ENCODE measurements at regions of chr9 and their contacts with region 1.

Region 1: DNA sequence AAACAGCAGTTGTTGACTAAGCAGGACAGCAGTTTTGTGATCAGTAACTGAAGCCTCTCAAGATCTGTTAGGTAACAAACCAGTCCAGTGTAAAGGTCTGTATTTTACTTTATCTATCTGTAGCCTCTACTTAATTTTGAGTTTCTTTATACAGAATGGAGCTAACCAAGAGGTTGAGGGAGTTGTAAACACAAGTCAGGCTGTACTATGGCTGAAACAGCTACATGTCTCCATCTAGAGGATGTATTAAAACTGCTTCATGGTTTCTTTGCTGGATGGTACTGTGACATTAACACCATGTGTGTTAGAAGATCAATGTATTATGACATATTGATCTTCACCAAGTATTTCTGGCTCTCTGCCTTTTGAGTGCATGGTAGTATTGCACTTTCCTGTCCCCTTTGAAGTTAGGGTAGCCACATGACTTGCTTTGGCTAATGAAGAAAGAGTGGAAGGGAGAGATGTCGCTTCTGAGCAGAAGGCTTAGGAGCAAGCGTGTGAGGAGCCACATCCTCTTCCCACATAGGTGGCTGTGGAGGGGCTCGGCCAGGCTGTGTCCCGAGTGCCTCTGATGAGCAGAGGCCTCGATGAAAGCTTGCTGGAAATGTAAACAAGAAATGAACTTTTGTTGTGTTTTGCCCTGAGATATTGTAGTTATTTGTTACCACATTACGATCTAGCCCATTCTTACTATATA is 105.6 kb upstream of the PCA3 start:
- DNase-seq: peak in 2 of 9 experiments; percentile 61 to 71
- ATAC-seq: peak; percentile 67
- H3K4me3 ChIP-seq: no peak overlapping the region
- H3K4me3 Mint-ChIP-seq: no peak overlapping the region
- H3K27ac ChIP-seq: no peak overlapping the region
- H3K27ac Mint-ChIP-seq: no peak overlapping the region
- H3K4me1 ChIP-seq: peaks cover 4% of the 10 kb centered on the region
- H3K4me1 Mint-ChIP-seq: peaks cover 23% of the 10 kb centered on the region
- H3K27me3 ChIP-seq: no peaks in the 10 kb centered on the region
- H3K27me3 Mint-ChIP-seq: no peaks in the 10 kb centered on the region
- CTCF ChIP-seq: peak; percentile 48

Region 2: DNA sequence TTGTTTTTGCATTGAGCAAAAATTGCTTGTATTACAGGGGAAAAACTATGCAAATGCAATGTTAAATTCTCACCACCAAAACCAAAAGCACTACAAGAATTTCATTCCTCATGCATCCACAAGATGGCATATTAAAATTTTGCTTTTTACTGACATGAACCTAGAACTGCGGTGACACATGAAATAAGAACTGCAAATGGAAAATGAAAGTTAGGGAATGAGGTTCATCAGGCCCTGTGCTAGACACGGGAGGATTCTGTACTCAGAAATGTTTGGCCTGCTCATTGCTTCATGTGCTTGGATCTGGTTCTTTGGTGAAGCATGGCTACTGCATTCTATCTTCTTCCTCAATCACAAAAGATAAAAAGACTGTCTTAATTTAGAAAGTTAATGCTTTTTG is 255.3 kb before region 1 on chr9:
- CTCF ChIA-PET with region 1: no interaction called
- POLR2A ChIA-PET with region 1: no interaction called
- intact Hi-C with region 1: loop called in 1 of 2 experiments (anchors 5 kb)
- DNase-seq: peak in 3 of 9 experiments; percentile 15 to 79 (median 63)
- ATAC-seq: peak; percentile 96
- H3K4me3 ChIP-seq: peak overlapping the region in 1 of 2 experiments; percentile 5
- H3K4me3 Mint-ChIP-seq: peak overlapping the region; percentile 66
- H3K27ac ChIP-seq: peak overlapping the region in 1 of 2 experiments; percentile 20
- H3K27ac Mint-ChIP-seq: peak overlapping the region; percentile 71
- H3K4me1 ChIP-seq: peaks cover 5% of the 10 kb centered on the region
- H3K4me1 Mint-ChIP-seq: peaks cover 9% of the 10 kb centered on the region
- H3K27me3 ChIP-seq: no peaks in the 10 kb centered on the region
- H3K27me3 Mint-ChIP-seq: no peaks in the 10 kb centered on the region
- CTCF ChIP-seq: peak; percentile 61

Region 3: GRCh38 chr9:76441551-76442322 is 216.9 kb before region 1 on chr9:
- CTCF ChIA-PET with region 1: interaction called, 19 read pairs
- POLR2A ChIA-PET with region 1: no interaction called
- intact Hi-C with region 1: no loop called
- DNase-seq: no peak
- ATAC-seq: no peak
- H3K4me3 ChIP-seq: no peak overlapping the region
- H3K4me3 Mint-ChIP-seq: no peak overlapping the region
- H3K27ac ChIP-seq: no peak overlapping the region
- H3K27ac Mint-ChIP-seq: no peak overlapping the region
- H3K4me1 ChIP-seq: no peaks in the 10 kb centered on the region
- H3K4me1 Mint-ChIP-seq: peaks cover 2% of the 10 kb centered on the region
- H3K27me3 ChIP-seq: no peaks in the 10 kb centered on the region
- H3K27me3 Mint-ChIP-seq: no peaks in the 10 kb centered on the region
- CTCF ChIP-seq: no peak

Region 4: DNA sequence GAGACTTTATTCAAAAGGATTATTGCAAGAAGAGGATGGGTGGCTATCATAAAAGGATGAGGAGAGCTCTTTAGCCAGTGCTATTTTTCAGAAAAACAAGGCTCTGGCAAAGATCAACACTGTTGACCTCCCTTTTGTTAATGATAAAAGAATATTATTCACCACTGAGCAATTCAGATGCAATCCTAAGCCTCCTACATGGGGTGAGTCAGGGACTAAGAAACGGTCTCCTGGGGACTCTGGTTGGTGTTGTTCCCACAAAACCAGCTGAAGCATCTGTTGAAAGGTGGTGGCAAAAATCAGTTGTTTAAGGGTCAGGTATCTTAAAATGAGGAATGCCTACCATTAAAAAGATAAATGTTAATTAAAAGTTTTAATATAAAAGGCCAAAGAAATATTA is 207.4 kb before region 1 on chr9:
- CTCF ChIA-PET with region 1: interaction called, 19 read pairs
- POLR2A ChIA-PET with region 1: interaction called, 3 read pairs
- intact Hi-C with region 1: loop called (anchors 1 kb)
- DNase-seq: no peak
- ATAC-seq: no peak
- H3K4me3 ChIP-seq: no peak overlapping the region
- H3K4me3 Mint-ChIP-seq: no peak overlapping the region
- H3K27ac ChIP-seq: no peak overlapping the region
- H3K27ac Mint-ChIP-seq: no peak overlapping the region
- H3K4me1 ChIP-seq: no peaks in the 10 kb centered on the region
- H3K4me1 Mint-ChIP-seq: peaks cover 4% of the 10 kb centered on the region
- H3K27me3 ChIP-seq: no peaks in the 10 kb centered on the region
- H3K27me3 Mint-ChIP-seq: peaks cover 3% of the 10 kb centered on the region
- CTCF ChIP-seq: no peak

Region 5: DNA sequence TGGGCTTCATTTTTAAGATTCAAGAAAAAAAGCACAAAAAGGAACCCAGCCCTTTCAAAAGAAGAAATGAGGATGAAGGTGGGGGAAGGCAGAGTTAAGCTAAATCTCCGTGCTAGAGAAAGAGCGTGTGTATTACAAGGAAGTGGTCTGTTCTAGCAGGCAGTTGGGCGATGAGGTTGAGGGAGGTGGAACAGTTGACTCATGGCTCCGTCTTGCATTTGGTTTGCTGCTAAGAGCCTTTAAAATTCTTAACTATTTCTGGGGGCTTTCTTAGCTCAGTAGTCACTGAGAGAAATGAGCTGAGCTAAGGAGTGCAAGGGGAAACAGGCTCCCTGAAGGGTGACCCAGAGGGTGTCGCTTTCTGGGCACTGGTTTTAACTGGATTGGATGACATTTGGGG is 82.3 kb before region 1 on chr9:
- CTCF ChIA-PET with region 1: interaction called, 3 read pairs
- POLR2A ChIA-PET with region 1: no interaction called
- intact Hi-C with region 1: loop called in 1 of 2 experiments (anchors 10 kb)
- DNase-seq: peak; percentile 10 to 89 (median 64)
- ATAC-seq: peak; percentile 76
- H3K4me3 ChIP-seq: no peak overlapping the region
- H3K4me3 Mint-ChIP-seq: peak overlapping the region; percentile 3
- H3K27ac ChIP-seq: peak overlapping the region in 1 of 2 experiments; percentile 42
- H3K27ac Mint-ChIP-seq: peak overlapping the region; percentile 12
- H3K4me1 ChIP-seq: peaks cover 3% of the 10 kb centered on the region
- H3K4me1 Mint-ChIP-seq: peaks cover 25% of the 10 kb centered on the region
- H3K27me3 ChIP-seq: no peaks in the 10 kb centered on the region
- H3K27me3 Mint-ChIP-seq: peaks cover 28% of the 10 kb centered on the region
- CTCF ChIP-seq: no peak